GM18951 (cell line): ENCODE measurements at regions of chr1 and their contacts with region 1.

Region 1: DNA sequence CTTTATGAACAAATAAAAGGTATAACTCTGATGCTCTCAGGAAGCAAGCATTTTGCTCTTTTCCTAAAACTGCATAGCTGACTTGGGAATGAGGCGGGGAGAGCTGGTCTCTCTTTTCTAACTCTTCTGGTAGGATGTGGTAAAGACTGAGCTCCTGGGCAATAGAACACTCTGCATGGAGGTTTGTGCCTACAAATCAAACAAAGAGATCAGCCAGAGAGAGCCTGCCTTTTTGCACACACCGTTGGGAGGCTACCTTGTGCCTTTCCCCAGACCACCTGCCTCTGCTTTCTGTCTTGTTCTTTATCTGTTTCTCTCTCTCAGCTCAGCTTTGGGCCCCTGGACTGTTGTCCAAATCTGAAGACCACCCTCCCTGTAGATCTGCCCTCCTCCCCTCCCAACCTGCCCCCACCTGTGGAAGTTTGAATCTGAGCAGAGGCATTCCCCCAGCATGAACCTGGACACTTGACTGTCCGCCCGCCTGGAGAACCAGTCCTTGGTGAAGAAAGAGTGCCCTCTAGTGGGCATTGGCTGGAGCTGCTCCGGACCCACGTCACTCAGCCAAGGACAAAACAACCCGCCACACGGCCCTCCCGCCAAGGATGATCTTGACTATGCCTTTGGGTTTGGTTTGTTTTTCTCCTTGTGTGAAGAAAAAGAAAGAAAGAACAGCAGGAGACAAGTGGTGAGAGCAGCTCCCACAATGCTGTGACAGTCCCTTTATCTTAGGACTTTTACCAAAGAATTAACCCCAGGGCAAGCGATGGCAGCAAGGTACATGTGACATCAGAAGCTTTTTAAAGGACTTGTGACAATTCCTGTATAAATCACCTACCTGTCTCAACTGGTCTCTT is 228.2 kb downstream of the PBX1 start:
- POLR2A ChIP-seq: no peak

Region 2: DNA sequence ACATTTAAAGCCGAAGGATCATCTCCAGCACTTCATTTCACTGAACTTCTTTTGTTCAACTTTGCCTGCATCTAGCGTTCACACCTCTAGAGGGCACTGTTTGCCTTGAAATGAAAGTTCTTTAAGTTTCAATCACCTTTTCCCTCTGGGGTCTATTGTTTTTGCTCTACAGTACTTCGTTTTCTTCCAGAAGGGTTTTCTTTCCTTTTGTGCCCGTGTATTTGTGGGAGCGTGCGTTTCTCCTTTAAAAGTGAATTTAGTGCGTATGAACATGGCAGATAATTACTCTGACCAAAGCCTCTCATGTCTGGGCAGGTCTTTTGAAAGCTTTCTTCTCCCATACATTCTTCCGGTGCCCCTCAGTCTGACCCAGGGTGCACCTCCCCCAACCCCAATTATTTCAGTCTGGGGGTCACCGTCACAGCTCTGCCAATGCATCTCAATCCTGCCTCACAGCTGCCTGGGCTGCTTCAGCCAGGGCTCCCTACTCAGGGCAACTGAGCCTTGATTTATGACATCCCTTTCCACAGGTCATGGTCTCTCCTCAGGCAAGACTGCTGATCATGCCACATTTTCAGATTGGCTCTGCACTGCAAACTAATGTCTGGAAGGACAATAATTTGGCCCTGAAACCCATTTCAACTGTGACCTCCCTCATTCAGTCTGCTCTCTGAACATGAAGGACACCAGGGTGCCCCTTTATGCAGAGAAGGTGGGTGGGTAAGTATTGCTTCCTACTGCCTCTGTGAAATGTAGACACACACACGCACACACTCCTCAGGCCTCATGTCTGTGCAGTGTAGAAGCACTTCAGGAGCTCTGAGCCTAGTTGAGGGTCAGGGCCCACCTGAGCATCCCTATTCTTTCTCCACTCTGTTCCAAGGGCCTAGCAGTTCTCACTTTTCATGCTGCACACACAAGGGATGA is 1376.9 kb before region 1 on chr1:
- in situ Hi-C with region 1: loop called (anchors 25 kb)
- POLR2A ChIP-seq: no peak

Region 3: GRCh38 chr1:163535807-163536206 is 1251.4 kb before region 1 on chr1:
- in situ Hi-C with region 1: loop called (anchors 10 kb)
- POLR2A ChIP-seq: no peak